ENCODE measurements at regions of chr17 and their contacts with region 1.

Region 1: DNA sequence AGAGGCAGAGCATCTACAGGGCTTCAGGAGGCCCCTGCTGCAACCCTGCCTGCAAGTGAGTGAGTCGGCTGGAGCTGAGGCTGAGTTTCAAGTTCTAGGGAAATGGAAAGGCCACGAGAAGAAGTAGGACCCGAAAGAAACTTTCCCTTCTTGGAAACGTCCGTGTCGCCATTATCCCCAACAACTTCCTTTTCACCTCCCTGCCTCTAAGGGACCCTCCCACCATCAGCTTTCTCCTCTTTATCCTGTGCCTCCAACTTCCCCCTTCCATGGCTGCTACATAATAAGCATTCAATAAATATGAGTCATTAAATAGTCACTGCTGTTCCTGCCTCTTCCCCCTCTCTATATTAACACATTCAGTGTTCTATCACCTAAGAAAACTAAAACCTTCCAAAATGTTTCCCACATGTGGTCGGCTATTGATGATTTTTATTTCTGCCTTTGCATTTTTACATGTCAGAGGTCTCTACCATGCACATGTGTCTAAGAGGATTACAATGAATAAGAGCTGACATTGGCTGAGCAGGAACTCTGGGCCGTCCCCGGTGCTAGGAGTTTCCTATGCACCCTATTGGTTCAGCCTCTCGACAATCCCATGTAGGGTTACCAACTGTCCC is 115.9 kb upstream of the TNRC6C start:
- DNase-seq: peak; percentile 65
- ATAC-seq: peak; percentile 63
- H3K4me3 Mint-ChIP-seq: peak overlapping the region; percentile 0
- H3K27ac Mint-ChIP-seq: peak overlapping the region; percentile 32
- H3K4me1 Mint-ChIP-seq: peaks cover 49% of the 10 kb centered on the region
- H3K27me3 Mint-ChIP-seq: peaks cover 5% of the 10 kb centered on the region

Region 2: DNA sequence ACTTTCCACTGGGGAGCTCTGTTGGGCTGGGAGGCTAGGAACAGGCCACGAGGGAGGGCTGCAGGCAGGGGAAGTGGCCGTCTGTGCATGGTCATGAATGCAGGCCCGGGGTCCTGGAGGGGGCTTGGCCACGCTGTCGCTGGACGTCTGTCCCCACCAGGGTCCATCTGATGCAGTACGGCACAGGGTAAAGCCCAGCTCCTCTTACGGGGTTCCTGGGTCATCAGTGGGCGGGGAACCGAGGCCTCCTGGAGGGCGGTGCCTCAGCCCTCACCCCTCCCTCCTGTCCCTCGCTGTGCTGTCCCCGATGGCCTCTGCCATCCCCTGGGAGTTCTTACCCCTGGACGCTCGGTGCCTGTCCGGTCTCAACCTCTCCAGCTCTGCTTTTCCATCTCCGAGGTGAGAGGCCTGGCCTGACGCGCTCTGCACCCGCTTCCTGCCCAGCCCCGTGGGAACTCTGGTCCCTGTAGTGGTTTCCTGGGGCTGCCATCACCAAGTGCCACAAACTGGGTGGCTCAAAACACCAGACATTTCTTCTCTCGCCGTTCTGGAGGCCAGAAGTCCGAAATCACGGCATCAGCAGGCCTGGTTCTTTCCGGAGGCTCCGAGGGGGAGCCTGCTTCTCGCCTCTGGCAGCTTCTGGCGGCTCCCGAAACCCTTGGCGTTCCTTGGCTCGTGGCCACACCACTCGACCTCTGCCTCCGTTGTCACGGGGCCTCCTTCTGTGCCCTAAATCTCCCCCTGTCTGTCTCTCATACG is 519.0 kb before region 1 on chr17:
- CTCF ChIA-PET with region 1: no interaction called
- POLR2A ChIA-PET with region 1: no interaction called
- intact Hi-C with region 1: loop called in 1 of 2 experiments (anchors 2 kb)
- DNase-seq: no peak
- ATAC-seq: no peak
- H3K4me3 Mint-ChIP-seq: no peak overlapping the region
- H3K27ac Mint-ChIP-seq: no peak overlapping the region
- H3K4me1 Mint-ChIP-seq: peaks cover 57% of the 10 kb centered on the region
- H3K27me3 Mint-ChIP-seq: no peaks in the 10 kb centered on the region

Region 3: DNA sequence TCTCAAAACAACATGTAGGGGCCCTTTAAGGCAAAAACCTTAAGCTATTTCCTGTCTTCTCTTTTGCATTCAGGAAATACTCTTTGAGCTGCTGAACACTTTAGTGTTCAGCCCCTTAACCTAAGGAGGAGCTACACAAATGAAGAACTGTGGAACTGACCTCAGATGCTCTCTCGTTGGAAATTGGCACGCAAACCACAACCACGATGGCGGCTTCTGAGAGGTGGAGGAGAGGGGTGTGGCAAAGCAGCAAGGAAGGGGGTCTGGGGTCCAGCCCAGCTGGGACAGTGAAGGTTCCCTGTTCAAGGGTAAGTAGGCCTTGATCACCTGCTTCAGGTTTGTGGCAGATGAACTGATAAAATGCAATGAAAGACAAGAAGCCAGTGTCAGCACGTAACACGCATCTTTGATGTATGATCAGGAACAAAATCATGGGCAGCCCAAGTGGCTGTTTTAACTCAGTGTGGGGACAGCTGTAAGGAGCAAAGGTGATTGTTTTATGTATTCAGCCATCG is 175.7 kb before region 1 on chr17:
- CTCF ChIA-PET with region 1: no interaction called
- POLR2A ChIA-PET with region 1: no interaction called
- intact Hi-C with region 1: loop called in 1 of 2 experiments (anchors 5 kb)
- DNase-seq: peak; percentile 84
- ATAC-seq: peak; percentile 86
- H3K4me3 Mint-ChIP-seq: peak overlapping the region; percentile 75
- H3K27ac Mint-ChIP-seq: peak overlapping the region; percentile 100
- H3K4me1 Mint-ChIP-seq: peaks cover 32% of the 10 kb centered on the region
- H3K27me3 Mint-ChIP-seq: no peaks in the 10 kb centered on the region

Region 4: DNA sequence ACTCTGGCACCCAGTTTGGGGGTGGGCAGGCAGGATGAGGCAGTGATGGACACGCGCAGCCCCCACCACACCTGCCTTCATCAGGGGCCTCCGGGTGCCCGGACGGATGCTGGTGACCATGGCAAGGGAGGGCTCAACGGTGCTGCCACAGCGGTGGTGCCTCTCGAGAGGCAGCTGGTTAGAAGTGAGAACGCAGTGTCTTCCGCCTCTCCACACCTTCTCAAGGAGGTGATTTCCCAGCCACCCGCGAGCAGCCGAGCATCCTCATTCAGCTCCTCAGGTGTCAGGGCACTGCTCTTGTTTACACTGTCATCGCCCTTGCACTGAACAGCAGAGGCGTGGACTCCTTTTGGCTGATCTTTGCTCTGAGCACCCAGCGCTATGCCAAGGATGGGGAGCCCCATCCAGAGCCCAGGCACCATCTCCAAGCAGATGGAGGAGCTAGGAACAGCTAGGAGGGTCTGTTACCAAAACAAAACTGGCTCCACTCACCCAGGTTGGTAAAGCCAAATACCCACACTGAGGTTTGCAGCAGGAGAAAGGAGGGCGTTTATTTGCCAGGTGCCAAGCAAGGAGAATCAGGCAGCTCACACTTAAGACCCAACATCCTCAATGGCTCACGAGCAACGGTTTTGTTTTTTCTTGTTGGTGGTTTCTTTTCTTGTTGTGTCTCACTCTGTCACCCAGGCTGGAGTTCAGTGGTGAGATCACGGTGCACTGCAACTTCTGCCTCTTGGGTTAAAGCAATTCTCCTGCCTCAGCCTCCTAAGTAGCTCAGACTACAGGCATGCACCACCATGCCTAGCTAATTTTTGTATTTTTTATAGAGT is 58.4 kb before region 1 on chr17:
- CTCF ChIA-PET with region 1: no interaction called
- POLR2A ChIA-PET with region 1: no interaction called
- intact Hi-C with region 1: loop called in 1 of 2 experiments (anchors 2 kb)
- DNase-seq: peak; percentile 83
- ATAC-seq: peak; percentile 94
- H3K4me3 Mint-ChIP-seq: peak overlapping the region; percentile 55
- H3K27ac Mint-ChIP-seq: peak overlapping the region; percentile 75
- H3K4me1 Mint-ChIP-seq: peaks cover 21% of the 10 kb centered on the region
- H3K27me3 Mint-ChIP-seq: no peaks in the 10 kb centered on the region

Region 5: GRCh38 chr17:77881545-77881944 is 38.9 kb after region 1 on chr17:
- CTCF ChIA-PET with region 1: interaction called, 4 read pairs
- POLR2A ChIA-PET with region 1: no interaction called
- intact Hi-C with region 1: loop called (anchors 1 kb)
- DNase-seq: peak; percentile 78
- ATAC-seq: peak; percentile 40
- H3K4me3 Mint-ChIP-seq: peak overlapping the region; percentile 43
- H3K27ac Mint-ChIP-seq: peak overlapping the region; percentile 90
- H3K4me1 Mint-ChIP-seq: peaks cover 77% of the 10 kb centered on the region
- H3K27me3 Mint-ChIP-seq: no peaks in the 10 kb centered on the region

Region 6: DNA sequence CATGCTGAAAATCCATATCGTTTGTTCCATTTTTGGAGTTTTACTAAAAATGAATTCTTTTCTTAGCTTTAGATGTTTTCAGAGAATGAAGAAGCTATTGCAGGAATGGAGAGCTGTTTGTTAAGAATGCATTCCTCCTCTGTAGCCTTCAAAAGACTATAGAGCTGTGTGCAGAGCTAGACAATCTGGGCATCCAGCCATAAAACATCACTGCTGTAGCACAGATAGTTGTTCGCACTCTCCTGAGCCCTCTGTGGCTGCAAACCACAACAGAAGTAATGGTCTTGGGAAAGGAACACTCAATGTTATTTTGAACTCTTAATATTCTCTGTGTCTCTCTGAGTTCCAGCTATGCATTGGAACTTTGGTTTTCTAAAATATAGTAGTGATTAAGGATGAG is 120.8 kb after region 1 on chr17:
- CTCF ChIA-PET with region 1: interaction called, 3 read pairs
- POLR2A ChIA-PET with region 1: interaction called, 9 read pairs
- intact Hi-C with region 1: loop called (anchors 1 to 2 kb)
- DNase-seq: peak; percentile 52
- ATAC-seq: no peak
- H3K4me3 Mint-ChIP-seq: peak overlapping the region; percentile 22
- H3K27ac Mint-ChIP-seq: no peak overlapping the region
- H3K4me1 Mint-ChIP-seq: peaks cover 69% of the 10 kb centered on the region
- H3K27me3 Mint-ChIP-seq: no peaks in the 10 kb centered on the region